ENCODE measurements at regions of chr4 and their contacts with region 1.

Region 1: DNA sequence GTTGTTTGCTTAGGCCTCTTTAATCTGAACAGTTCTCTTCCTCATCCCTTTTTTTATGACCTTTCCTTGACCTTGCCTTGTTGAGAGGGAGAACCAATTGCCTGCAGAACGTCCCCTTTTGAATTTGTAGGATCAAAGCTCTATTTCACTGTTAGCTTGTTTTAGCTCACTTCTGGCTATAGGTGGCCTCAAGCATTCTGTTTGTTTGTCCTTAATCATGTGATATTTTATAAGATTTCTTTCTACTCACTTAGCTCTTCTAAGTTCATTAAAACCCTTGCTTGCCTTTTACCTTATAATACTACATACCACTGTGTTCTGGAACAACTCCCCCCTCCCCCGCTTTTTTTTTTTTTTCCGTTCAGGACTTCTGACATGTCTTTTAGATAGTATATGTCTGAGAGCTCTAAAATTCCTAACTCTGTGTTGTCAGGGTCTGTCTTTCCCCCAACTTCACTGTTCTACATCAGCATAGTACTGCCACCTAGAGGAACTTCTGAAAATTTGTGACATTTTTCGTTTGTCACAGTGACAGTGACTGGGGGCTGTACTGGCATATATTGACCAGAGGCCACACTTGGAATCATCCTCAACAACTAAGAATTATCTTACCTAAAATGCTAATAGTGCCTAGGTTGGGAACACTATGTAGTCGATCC is 128.5 kb downstream of the LARP7 start:
- DNase-seq: peak in 1 of 2 experiments; percentile 9
- H3K4me3 ChIP-seq: peak overlapping the region in 1 of 4 experiments; percentile 42; a peak in 2 of 8 replicates
- H3K27ac ChIP-seq: no peak overlapping the region
- H3K4me1 ChIP-seq: peaks cover 0 to 5% (median 3%) of the 10 kb centered on the region in 4 experiments; a peak in 3 of 7 replicates
- H3K27me3 ChIP-seq: no peaks in the 10 kb centered on the region
- CTCF ChIP-seq: peak in 2 of 3 experiments; percentile 68 to 79; a peak in 3 of 4 replicates
- EP300 ChIP-seq: no peak
- POLR2A ChIP-seq: no peak
- RAD21 ChIP-seq: peak; percentile 79 to 85

Region 2: DNA sequence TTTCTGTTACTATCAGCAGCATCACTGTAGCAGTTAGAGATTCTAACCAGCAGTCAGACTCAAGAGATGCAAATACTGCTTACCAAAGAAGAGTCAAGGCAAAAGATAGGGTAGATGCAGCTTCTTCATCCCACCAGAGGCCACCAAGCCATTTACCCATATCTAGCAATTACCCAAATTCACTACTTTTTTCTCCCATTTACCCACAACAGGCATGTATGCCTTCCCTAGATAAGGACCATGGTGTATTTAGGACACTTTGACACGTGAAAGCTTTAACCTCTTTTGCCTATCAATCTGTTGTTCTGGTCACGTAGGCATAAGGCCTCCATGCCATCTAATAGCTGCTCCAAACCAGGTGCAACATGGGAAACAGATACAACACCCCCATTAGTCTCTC is 122.9 kb before region 1 on chr4:
- CTCF ChIA-PET with region 1: interaction called, 36 read pairs
- POLR2A ChIA-PET with region 1: interaction called, 612 read pairs
- DNase-seq: no peak
- H3K4me3 ChIP-seq: no peak overlapping the region
- H3K27ac ChIP-seq: no peak overlapping the region
- H3K4me1 ChIP-seq: peaks cover 0 to 9% (median 1%) of the 10 kb centered on the region in 4 experiments; a peak in 1 of 7 replicates
- H3K27me3 ChIP-seq: no peaks in the 10 kb centered on the region
- CTCF ChIP-seq: no peak
- EP300 ChIP-seq: no peak
- POLR2A ChIP-seq: peak in 1 of 2 experiments; percentile 10; a peak in 1 of 3 replicates
- RAD21 ChIP-seq: no peak

Region 3: GRCh38 chr4:112664611-112665010 is 100.8 kb before region 1 on chr4:
- CTCF ChIA-PET with region 1: interaction called, 14 read pairs
- POLR2A ChIA-PET with region 1: interaction called, 6 read pairs
- DNase-seq: no peak
- H3K4me3 ChIP-seq: no peak overlapping the region
- H3K27ac ChIP-seq: no peak overlapping the region
- H3K4me1 ChIP-seq: peaks cover 0 to 4% (median 0%) of the 10 kb centered on the region in 4 experiments; a peak in 2 of 7 replicates
- H3K27me3 ChIP-seq: no peaks in the 10 kb centered on the region
- CTCF ChIP-seq: no peak
- EP300 ChIP-seq: no peak
- POLR2A ChIP-seq: no peak
- RAD21 ChIP-seq: no peak

Region 4: GRCh38 chr4:112704991-112705845 is 60.2 kb before region 1 on chr4:
- CTCF ChIA-PET with region 1: interaction called, 25 read pairs
- POLR2A ChIA-PET with region 1: interaction called, 39 read pairs
- DNase-seq: peak; percentile 19 to 58
- H3K4me3 ChIP-seq: peak overlapping the region; percentile 53 to 73 (median 64)
- H3K27ac ChIP-seq: peak overlapping the region; percentile 84
- H3K4me1 ChIP-seq: peaks cover 0 to 21% (median 3%) of the 10 kb centered on the region in 4 experiments; a peak in 6 of 7 replicates
- H3K27me3 ChIP-seq: no peaks in the 10 kb centered on the region
- CTCF ChIP-seq: no peak
- EP300 ChIP-seq: no peak
- POLR2A ChIP-seq: peak; percentile 60 to 76
- RAD21 ChIP-seq: no peak

Region 5: DNA sequence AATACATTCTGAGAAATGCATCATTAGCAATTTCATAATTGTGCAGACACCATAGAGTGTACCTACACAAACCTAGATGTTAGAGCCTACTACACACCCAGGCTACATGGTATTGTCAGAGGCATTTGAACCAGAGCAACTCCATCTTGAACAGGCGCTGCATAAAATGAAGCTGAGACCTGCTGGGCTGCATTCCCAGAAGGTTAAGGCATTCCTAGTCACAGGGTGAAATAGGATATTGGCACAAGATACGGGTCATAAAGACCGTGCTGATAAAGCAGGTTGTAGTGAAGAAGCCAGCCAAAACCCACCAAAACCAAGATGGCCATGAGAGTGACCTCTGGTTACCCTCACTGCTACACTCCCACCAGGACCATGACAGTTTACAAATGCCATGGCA is 12.1 kb before region 1 on chr4:
- CTCF ChIA-PET with region 1: interaction called, 100 read pairs
- POLR2A ChIA-PET with region 1: interaction called, 90 read pairs
- DNase-seq: no peak
- H3K4me3 ChIP-seq: no peak overlapping the region
- H3K27ac ChIP-seq: peak overlapping the region; percentile 43; the same call in 1 of the 2 replicates
- H3K4me1 ChIP-seq: peaks cover 4 to 13% (median 9%) of the 10 kb centered on the region in 4 experiments; a peak in 6 of 7 replicates
- H3K27me3 ChIP-seq: no peaks in the 10 kb centered on the region
- CTCF ChIP-seq: no peak
- EP300 ChIP-seq: no peak
- POLR2A ChIP-seq: no peak
- RAD21 ChIP-seq: no peak

Region 6: DNA sequence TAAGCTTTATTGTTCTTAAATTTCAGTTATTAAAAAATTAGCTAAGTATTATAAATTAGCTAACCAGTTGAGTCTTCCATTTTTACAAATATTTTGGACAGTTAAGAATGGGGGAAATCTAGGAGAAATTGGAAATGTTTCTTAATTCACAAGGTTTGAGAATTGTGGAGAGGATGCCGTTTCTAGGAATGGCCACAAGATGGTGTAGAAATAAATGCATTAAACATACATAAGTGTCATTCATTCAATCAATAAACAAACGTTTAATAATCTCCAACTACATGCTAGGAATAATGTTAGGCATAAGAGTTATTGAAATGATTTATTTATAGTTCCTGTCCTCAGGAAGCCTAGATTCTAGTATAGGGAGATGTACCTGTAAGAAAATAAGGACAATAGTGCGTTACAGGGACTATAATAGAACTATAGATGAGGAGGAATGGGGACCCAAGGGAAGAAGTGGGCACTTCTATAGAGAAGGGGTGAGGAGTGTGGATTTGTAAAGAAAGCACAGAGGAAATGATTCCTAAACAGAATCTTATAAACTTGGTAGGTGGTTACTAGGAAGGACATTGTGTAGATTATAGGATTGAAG is 88.3 kb after region 1 on chr4:
- CTCF ChIA-PET with region 1: interaction called, 13 read pairs
- POLR2A ChIA-PET with region 1: no interaction called
- DNase-seq: no peak
- H3K4me3 ChIP-seq: no peak overlapping the region
- H3K27ac ChIP-seq: no peak overlapping the region
- H3K4me1 ChIP-seq: peaks cover 0 to 6% (median 4%) of the 10 kb centered on the region in 4 experiments; a peak in 3 of 7 replicates
- H3K27me3 ChIP-seq: no peaks in the 10 kb centered on the region
- CTCF ChIP-seq: peak in 1 of 3 experiments; percentile 48; a peak in 2 of 4 replicates
- EP300 ChIP-seq: no peak
- POLR2A ChIP-seq: no peak
- RAD21 ChIP-seq: peak; percentile 34 to 36; a peak in 3 of 4 replicates

Region 7: DNA sequence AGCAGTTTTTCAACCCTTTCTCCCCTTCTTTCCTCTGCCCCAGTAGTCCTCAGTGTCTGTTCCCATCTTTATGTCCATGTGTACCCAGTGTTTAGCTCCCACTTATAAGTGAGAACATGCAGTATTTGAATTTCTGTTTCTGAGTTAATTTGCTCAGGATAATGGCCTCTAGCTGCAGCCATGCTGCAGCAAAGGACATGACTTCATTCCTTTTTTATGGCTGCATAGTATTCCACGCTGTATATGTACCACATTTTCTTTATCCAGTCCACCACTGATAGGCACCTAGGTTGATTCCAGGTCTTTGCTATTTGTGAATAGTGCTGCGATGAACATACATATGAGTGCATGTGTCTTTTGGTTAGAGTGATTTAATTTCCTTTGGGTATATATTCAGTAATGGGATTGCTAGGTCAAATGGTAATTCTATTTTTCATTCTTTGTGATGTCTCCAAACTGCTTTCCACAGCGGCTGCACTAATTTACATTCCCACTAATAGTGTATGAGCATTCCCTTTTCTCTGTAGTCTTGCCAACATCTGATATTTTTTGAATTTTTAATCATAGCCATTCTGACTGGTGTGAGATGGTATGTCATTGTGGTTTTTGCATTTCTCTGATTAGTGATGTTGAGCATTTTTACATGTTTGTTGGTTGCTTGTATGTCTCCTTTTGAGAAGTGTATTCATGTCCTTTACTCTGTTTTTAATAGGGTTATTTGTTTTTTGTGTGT is 229.5 kb after region 1 on chr4:
- CTCF ChIA-PET with region 1: no interaction called
- POLR2A ChIA-PET with region 1: no interaction called
- DNase-seq: no peak
- H3K4me3 ChIP-seq: no peak overlapping the region
- H3K27ac ChIP-seq: no peak overlapping the region
- H3K4me1 ChIP-seq: no peaks in the 10 kb centered on the region; a peak in 1 of 7 replicates
- H3K27me3 ChIP-seq: no peaks in the 10 kb centered on the region
- CTCF ChIP-seq: no peak
- EP300 ChIP-seq: no peak
- POLR2A ChIP-seq: no peak
- RAD21 ChIP-seq: no peak

Region 8: DNA sequence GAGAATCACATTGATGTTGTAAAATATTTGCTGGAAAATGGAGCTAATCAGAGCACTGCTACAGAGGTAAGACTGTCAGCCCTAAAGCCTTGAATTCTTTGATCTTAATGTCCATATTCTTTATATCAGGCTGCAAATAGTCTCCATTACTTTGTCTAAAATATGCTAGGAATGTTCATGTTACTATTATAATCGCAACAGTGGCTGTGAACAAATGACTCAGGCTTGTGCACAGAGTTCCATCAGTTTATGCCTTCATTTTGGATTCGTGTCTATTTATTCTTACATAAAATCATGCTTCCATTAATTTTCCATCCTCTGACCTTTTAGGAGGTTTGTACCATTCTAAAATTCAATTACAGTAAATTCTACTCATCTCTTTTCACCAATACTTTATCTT is 466.7 kb after region 1 on chr4:
- CTCF ChIA-PET with region 1: no interaction called
- POLR2A ChIA-PET with region 1: no interaction called
- DNase-seq: no peak
- H3K4me3 ChIP-seq: no peak overlapping the region
- H3K27ac ChIP-seq: no peak overlapping the region
- H3K4me1 ChIP-seq: no peaks in the 10 kb centered on the region
- H3K27me3 ChIP-seq: no peaks in the 10 kb centered on the region
- CTCF ChIP-seq: no peak
- EP300 ChIP-seq: no peak
- POLR2A ChIP-seq: no peak
- RAD21 ChIP-seq: no peak

Measured in H1 (cell line).